B cell (primary cell): ENCODE measurements at regions of chr4 and their contacts with region 1.

Region 1: GRCh38 chr4:94207469-94208224 is at the start of gene SMARCAD1:
- DNase-seq: peak; percentile 94
- ATAC-seq: peak; percentile 83
- H3K4me3 ChIP-seq: peak within 1 kb of the TSS; percentile 77 to 95 (median 90)
- H3K4me3 Mint-ChIP-seq: peak within 1 kb of the TSS; percentile 97
- H3K27ac ChIP-seq: peak within 1 kb of the TSS; percentile 82 to 94
- H3K27ac Mint-ChIP-seq: peak within 1 kb of the TSS; percentile 98
- H3K4me1 ChIP-seq: peaks cover 9 to 12% of the 10 kb centered on the region in 2 donors
- H3K4me1 Mint-ChIP-seq: peaks cover 31% of the 10 kb centered on the region
- H3K27me3 ChIP-seq: peaks cover 0 to 4% (median 2%) of the 10 kb centered on the region in 4 experiments
- H3K27me3 Mint-ChIP-seq: peaks cover 11% of the 10 kb centered on the region
- CTCF ChIP-seq: no peak
- total RNA-seq, gene SMARCAD1: 26.7 and 30.4 TPM in 2 replicates

Region 2: GRCh38 chr4:94175553-94176270 is 31.9 kb before region 1 on chr4:
- CTCF ChIA-PET with region 1: no interaction called
- POLR2A ChIA-PET with region 1: no interaction called
- intact Hi-C with region 1: no loop called
- DNase-seq: no peak
- ATAC-seq: no peak
- H3K4me3 ChIP-seq: no peak overlapping the region
- H3K4me3 Mint-ChIP-seq: no peak overlapping the region
- H3K27ac ChIP-seq: no peak overlapping the region
- H3K27ac Mint-ChIP-seq: no peak overlapping the region
- H3K4me1 ChIP-seq: no peaks in the 10 kb centered on the region
- H3K4me1 Mint-ChIP-seq: no peaks in the 10 kb centered on the region
- H3K27me3 ChIP-seq: no peaks in the 10 kb centered on the region
- H3K27me3 Mint-ChIP-seq: peaks cover 18% of the 10 kb centered on the region
- CTCF ChIP-seq: no peak

Region 3: DNA sequence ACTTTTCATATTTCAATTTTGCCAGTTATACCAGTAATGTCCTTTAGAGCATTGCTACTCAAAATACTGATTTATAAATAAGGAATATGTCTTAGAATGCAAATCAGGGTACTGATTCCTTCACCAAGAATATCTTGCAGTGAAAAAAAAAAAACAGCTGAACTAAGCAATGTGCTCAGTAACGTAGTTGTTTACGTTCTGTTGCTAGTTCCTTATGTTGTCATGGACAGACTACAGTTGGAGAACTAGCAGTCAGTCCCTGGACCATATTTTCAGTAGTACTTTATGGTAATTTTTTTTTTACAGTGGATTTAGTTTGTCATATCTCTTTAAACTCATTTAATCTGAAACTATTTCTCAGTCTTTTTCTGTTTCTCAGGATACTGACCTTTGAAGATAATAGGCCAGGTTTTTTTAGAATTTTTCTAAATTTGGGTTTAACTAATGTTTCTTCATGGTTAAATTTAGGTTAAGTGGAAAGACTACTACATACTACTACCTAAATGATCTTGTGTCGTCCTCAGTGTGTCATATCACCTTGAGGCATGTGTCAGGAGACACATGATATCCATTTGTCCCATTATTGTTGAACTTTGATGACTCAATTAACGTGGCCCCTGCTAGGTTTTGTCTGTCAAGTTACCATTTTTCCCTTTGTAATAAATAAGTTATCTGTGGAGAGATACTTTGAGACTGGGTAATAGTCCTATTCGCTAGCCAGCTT is 21.0 kb after region 1 on chr4:
- CTCF ChIA-PET with region 1: no interaction called
- POLR2A ChIA-PET with region 1: no interaction called
- intact Hi-C with region 1: loop called (anchors 2 kb)
- DNase-seq: no peak
- ATAC-seq: no peak
- H3K4me3 ChIP-seq: no peak overlapping the region
- H3K4me3 Mint-ChIP-seq: no peak overlapping the region
- H3K27ac ChIP-seq: no peak overlapping the region
- H3K27ac Mint-ChIP-seq: no peak overlapping the region
- H3K4me1 ChIP-seq: peaks cover 0 to 5% of the 10 kb centered on the region in 2 donors
- H3K4me1 Mint-ChIP-seq: peaks cover 22% of the 10 kb centered on the region
- H3K27me3 ChIP-seq: no peaks in the 10 kb centered on the region
- H3K27me3 Mint-ChIP-seq: no peaks in the 10 kb centered on the region
- CTCF ChIP-seq: no peak

Region 4: GRCh38 chr4:94451695-94452475 is 244.2 kb after region 1 on chr4 and contains the start of gene PDLIM5:
- CTCF ChIA-PET with region 1: no interaction called
- POLR2A ChIA-PET with region 1: no interaction called
- intact Hi-C with region 1: loop called (anchors 1 kb)
- DNase-seq: peak; percentile 95
- ATAC-seq: peak; percentile 95
- H3K4me3 ChIP-seq: peak within 1 kb of the TSS; percentile 72 to 96 (median 93)
- H3K4me3 Mint-ChIP-seq: peak within 1 kb of the TSS; percentile 89
- H3K27ac ChIP-seq: peak within 1 kb of the TSS; percentile 57 to 86
- H3K27ac Mint-ChIP-seq: peak within 1 kb of the TSS; percentile 84
- H3K4me1 ChIP-seq: peaks cover 16 to 19% of the 10 kb centered on the region in 2 donors
- H3K4me1 Mint-ChIP-seq: peaks cover 19% of the 10 kb centered on the region
- H3K27me3 ChIP-seq: peaks cover 0 to 14% (median 5%) of the 10 kb centered on the region in 4 experiments
- H3K27me3 Mint-ChIP-seq: peaks cover 21% of the 10 kb centered on the region
- CTCF ChIP-seq: no peak
- total RNA-seq, gene PDLIM5: 30.2 and 37.0 TPM in 2 replicates